K562 (cell line): ENCODE measurements at regions of chr1 and their contacts with region 1.

Region 1: GRCh38 chr1:37764414-37764825 is 500 bp downstream of the EPHA10 start:
- DNase-seq: peak; percentile 67 to 83 (median 76)
- ATAC-seq: peak; percentile 93
- H3K4me3 ChIP-seq: no peak overlapping the region
- H3K27ac ChIP-seq: no peak overlapping the region
- H3K4me1 ChIP-seq: peaks cover 4 to 34% of the 10 kb centered on the region in 2 experiments; a peak in 3 of 5 replicates
- H3K27me3 ChIP-seq: peaks cover 34 to 42% of the 10 kb centered on the region in 2 experiments
- CTCF ChIP-seq: no peak
- EP300 ChIP-seq: no peak
- POLR2A ChIP-seq: no peak
- RAD21 ChIP-seq: no peak

Region 2: DNA sequence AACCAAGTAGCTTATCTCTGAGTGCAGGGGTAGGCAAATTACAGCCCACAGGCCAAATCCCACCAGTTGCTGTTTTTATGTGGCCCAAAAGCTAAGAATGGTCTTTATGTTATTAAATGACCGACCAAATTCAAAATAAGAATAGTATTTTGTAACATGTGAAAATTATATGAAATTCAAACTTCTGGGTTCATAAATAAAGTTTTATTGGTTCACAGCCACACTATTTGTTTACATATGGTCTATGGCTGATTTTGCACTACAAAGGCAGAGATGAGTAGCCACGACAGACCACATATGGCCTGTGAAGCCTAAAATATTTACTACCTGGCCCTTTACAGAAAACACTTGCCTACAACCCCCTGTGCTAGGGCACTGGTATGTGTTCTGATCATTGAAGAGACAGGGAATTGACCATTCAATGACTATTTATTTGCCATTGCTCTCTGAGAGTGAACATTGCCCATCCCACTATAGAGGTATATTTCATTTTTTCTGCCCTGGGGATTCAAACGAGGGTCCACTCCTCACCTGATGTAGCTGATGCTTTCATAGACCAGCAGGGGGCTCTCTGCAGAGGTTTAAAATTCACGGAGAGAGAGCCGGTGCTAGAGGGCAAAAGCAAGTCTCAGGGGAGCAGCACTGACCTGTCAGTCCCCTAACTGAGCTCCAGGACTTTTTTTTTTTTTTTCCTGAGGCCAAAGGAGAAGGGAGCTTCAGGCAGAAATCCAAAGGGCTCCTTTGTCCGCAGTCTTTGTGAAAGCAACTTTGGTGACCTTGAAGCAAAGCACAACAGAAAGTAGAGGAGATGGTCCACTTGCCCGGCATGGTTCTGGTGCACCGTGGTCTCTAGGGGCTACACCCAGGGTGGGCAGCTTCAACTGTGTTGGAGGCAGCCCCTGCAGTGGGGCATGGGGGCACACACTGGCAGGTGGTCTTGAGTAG is 161.4 kb before region 1 on chr1:
- CTCF ChIA-PET with region 1: interaction called, 3 read pairs
- POLR2A ChIA-PET with region 1: no interaction called
- in situ Hi-C with region 1: no loop called
- intact Hi-C with region 1: loop called (anchors 10 kb)
- DNase-seq: peak; percentile 68 to 74 (median 70)
- ATAC-seq: peak; percentile 90
- H3K4me3 ChIP-seq: no peak overlapping the region
- H3K27ac ChIP-seq: no peak overlapping the region
- H3K4me1 ChIP-seq: peaks cover 0 to 4% of the 10 kb centered on the region in 2 experiments; a peak in 2 of 5 replicates
- H3K27me3 ChIP-seq: peaks cover 51 to 66% of the 10 kb centered on the region in 2 experiments
- CTCF ChIP-seq: peak; percentile 78 to 86 (median 80)
- EP300 ChIP-seq: no peak
- POLR2A ChIP-seq: no peak
- RAD21 ChIP-seq: peak; percentile 42 to 55

Region 3: GRCh38 chr1:39282537-39283216 is 1518.3 kb after region 1 on chr1:
- CTCF ChIA-PET with region 1: no interaction called
- POLR2A ChIA-PET with region 1: no interaction called
- in situ Hi-C with region 1: no loop called
- intact Hi-C with region 1: no loop called
- DNase-seq: no peak
- ATAC-seq: no peak; the same call in 2 of the 3 replicates
- H3K4me3 ChIP-seq: no peak overlapping the region
- H3K27ac ChIP-seq: no peak overlapping the region
- H3K4me1 ChIP-seq: no peaks in the 10 kb centered on the region
- H3K27me3 ChIP-seq: no peaks in the 10 kb centered on the region
- CTCF ChIP-seq: no peak
- EP300 ChIP-seq: no peak
- POLR2A ChIP-seq: no peak
- RAD21 ChIP-seq: no peak